Activated CD8-positive, alpha-beta T cell treated with anti-CD3 and anti-CD28 coated beads, Interleukin-2, amount 10 ng/mL, durations not matched to agents 7 days and 5 days (primary cell): ENCODE measurements at regions of chr1 and their contacts with region 1.

Region 1: DNA sequence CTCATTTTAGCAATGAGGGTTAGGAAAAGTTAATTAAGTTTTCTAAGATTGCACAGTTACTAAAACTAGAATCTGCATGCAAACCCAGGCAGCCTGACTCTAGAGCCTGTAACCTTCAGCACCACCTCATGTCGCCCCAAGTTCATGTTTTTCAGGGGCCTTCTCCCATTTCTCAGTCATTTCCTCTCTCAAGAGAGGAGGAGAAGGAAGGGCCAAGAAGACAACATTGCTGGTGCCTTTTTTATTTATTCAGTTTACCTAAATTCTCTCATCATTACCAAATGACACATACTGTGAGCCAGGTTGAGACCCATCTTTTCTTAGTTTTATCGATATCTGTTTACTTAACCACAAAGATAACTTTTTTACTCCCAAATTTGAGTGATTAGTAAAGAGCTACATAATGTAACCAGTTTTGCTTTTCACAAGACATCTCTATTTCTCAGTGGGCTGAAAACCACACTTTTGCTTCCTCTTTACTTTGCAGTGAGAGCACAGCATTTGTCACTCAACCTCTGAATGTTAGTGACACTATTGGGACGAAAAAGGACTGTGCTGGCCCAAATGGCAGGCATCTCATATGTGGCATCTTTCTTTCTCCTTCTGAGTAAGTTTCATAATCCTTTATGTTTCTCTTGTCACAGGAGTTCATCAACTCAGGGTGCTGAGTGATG is at the start of gene CD101:
- DNase-seq: peak; percentile 51
- ATAC-seq: peak; percentile 81
- H3K4me3 Mint-ChIP-seq: peak within 1 kb of the TSS; percentile 70
- H3K27ac Mint-ChIP-seq: peak within 1 kb of the TSS; percentile 91
- H3K4me1 Mint-ChIP-seq: peaks cover 60% of the 10 kb centered on the region
- H3K27me3 Mint-ChIP-seq: no peaks in the 10 kb centered on the region
- total RNA-seq, gene CD101: 28.6 to 34.4 TPM

Region 2: GRCh38 chr1:116987256-116987555 is 14.2 kb before region 1 on chr1:
- CTCF ChIA-PET with region 1: interaction called, 12 read pairs
- POLR2A ChIA-PET with region 1: interaction called, 5 read pairs
- DNase-seq: peak; percentile 76
- ATAC-seq: peak; percentile 93
- H3K4me3 Mint-ChIP-seq: peak overlapping the region; percentile 56
- H3K27ac Mint-ChIP-seq: peak overlapping the region; percentile 88
- H3K4me1 Mint-ChIP-seq: peaks cover 48% of the 10 kb centered on the region
- H3K27me3 Mint-ChIP-seq: no peaks in the 10 kb centered on the region

Region 3: DNA sequence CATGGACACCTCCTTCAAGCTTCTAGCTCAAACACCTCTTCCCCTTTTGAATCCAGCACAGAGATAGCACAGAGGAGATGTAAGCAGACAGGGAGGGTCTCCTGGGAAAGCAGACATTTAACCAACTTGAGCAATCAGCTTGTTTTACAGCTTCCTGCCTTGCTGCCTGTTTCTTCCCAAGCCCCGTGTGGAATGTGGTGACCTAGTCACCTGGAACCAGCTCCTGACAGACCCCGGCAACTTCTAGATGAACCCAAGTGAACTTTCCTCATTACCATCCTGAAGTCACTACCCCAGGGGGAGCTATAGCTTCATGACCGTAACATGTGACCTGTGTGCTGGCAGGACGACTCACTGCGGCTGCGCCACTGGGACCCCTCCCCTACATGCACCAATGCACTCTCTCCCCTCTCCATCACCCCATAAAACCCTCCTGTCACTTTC is 34.6 kb after region 1 on chr1:
- CTCF ChIA-PET with region 1: no interaction called
- POLR2A ChIA-PET with region 1: no interaction called
- DNase-seq: no peak
- ATAC-seq: no peak
- H3K4me3 Mint-ChIP-seq: no peak overlapping the region
- H3K27ac Mint-ChIP-seq: no peak overlapping the region
- H3K4me1 Mint-ChIP-seq: no peaks in the 10 kb centered on the region
- H3K27me3 Mint-ChIP-seq: no peaks in the 10 kb centered on the region